ENCODE measurements at regions of chr2 and their contacts with region 1.

Region 1: GRCh38 chr2:42008238-42008921 is 39.4 kb upstream of the PKDCC start:
- DNase-seq: no peak
- ATAC-seq: peak; percentile 42; the same call in 1 of the 2 replicates
- H3K4me3 ChIP-seq: no peak overlapping the region
- H3K27ac ChIP-seq: no peak overlapping the region
- H3K4me1 ChIP-seq: peaks cover 15% of the 10 kb centered on the region
- H3K27me3 ChIP-seq: no peaks in the 10 kb centered on the region
- CTCF ChIP-seq: no peak

Region 2: DNA sequence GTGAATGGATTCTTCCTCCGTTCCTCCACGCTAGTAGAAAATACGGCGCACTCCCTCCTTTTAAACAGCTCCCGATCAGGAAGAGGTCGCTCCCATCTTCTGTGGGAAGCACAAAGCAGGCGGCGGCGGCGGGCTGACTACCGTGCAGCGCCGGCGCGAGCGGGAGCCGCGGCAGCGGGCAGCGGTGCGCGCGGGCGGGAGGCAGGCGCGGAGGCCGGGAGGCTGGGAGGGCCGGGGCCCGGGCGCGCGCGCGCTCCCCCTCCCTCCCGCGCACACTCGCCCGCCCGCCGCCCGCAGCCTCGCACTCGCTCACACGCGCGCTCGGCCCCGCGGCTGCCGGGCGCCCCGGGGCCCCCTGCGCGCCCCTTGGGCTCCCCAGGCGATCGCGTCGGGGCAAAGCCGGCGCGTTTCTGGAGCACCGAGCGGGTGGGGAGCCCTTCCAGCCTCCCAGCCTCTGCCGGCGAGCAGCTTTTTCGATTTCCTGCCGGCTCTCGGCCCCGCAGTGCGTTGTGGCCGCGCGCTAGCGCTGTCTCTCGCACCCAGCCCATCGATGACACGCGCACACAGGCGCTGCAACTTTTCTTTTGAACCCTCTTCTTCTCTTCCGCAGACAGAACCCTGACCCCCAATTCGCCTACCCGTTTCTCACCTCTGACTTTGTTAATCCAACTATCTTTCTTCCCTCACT is 1556.3 kb before region 1 on chr2 and contains the start of gene SLC8A1:
- CTCF ChIA-PET with region 1: no interaction called
- POLR2A ChIA-PET with region 1: interaction called, 25 read pairs
- in situ Hi-C with region 1: no loop called
- intact Hi-C with region 1: no loop called
- DNase-seq: no peak
- ATAC-seq: peak; percentile 82
- H3K4me3 ChIP-seq: peak within 1 kb of the TSS; percentile 48 to 51
- H3K27ac ChIP-seq: no peak within 1 kb of the TSS
- H3K4me1 ChIP-seq: peaks cover 4% of the 10 kb centered on the region; the same call in 1 of the 2 replicates
- H3K27me3 ChIP-seq: peaks cover 12% of the 10 kb centered on the region
- CTCF ChIP-seq: no peak
- total RNA-seq, gene SLC8A1: 0.59 TPM

Region 3: DNA sequence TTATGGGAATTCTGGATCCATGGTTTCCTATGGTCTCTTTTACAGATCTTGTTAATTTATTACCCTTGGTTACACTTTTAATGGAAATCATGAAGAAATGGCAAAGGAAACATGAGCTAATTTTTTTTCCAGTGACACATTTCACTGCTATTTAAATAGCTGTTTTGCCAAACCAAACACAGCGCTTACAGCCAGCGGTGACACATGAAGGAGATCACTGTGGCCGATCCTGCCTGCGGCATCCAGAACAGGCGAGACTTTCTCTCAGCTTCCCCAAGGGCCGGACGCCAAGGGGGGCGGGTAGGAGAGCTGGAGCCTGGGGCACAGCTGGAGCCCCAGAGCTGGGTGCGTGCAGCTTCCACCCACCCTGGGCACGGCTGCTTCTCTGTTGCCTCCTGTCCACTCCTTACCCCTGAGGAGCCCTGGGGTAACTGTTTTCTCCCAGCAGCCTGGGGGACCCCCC is 41.9 kb before region 1 on chr2:
- CTCF ChIA-PET with region 1: no interaction called
- POLR2A ChIA-PET with region 1: no interaction called
- in situ Hi-C with region 1: no loop called
- intact Hi-C with region 1: no loop called
- DNase-seq: peak; percentile 10
- ATAC-seq: peak; percentile 84
- H3K4me3 ChIP-seq: no peak overlapping the region
- H3K27ac ChIP-seq: peak overlapping the region; percentile 39; the same call in 1 of the 2 replicates
- H3K4me1 ChIP-seq: peaks cover 15% of the 10 kb centered on the region
- H3K27me3 ChIP-seq: peaks cover 2% of the 10 kb centered on the region; the same call in 1 of the 2 replicates
- CTCF ChIP-seq: no peak

Measured in Panc1 (cell line).